Kidney (tissue), 22 donors: ENCODE measurements at regions of chr2 and their contacts with region 1.

Region 1: GRCh38 chr2:65035346-65035943 is 20.8 kb upstream of the CEP68 start:
- DNase-seq: peak in 1 of 5 donors; percentile 31
- H3K4me3 ChIP-seq: no peak overlapping the region
- H3K27ac ChIP-seq: no peak overlapping the region
- H3K4me1 ChIP-seq: peaks cover 0 to 11% (median 2%) of the 10 kb centered on the region in 3 donors
- H3K27me3 ChIP-seq: no peaks in the 10 kb centered on the region
- CTCF ChIP-seq: no peak

Region 2: GRCh38 chr2:64859312-64860212 is 175.9 kb before region 1 on chr2:
- intact Hi-C with region 1: no loop called
- DNase-seq: peak; percentile 82 to 95 (median 86)
- H3K4me3 ChIP-seq: peak overlapping the region; percentile 13 to 59 (median 56)
- H3K27ac ChIP-seq: peak overlapping the region; percentile 65 to 78
- H3K4me1 ChIP-seq: peaks cover 2 to 20% (median 7%) of the 10 kb centered on the region in 3 donors
- H3K27me3 ChIP-seq: no peaks in the 10 kb centered on the region
- CTCF ChIP-seq: no peak

Region 3: GRCh38 chr2:64922482-64923384 is 112.7 kb before region 1 on chr2:
- intact Hi-C with region 1: loop called (anchors 5 kb)
- DNase-seq: no peak
- H3K4me3 ChIP-seq: no peak overlapping the region
- H3K27ac ChIP-seq: no peak overlapping the region
- H3K4me1 ChIP-seq: no peaks in the 10 kb centered on the region
- H3K27me3 ChIP-seq: no peaks in the 10 kb centered on the region
- CTCF ChIP-seq: no peak